HAP-1 (cell line): ENCODE measurements at regions of chr12 and their contacts with region 1.

Region 1: DNA sequence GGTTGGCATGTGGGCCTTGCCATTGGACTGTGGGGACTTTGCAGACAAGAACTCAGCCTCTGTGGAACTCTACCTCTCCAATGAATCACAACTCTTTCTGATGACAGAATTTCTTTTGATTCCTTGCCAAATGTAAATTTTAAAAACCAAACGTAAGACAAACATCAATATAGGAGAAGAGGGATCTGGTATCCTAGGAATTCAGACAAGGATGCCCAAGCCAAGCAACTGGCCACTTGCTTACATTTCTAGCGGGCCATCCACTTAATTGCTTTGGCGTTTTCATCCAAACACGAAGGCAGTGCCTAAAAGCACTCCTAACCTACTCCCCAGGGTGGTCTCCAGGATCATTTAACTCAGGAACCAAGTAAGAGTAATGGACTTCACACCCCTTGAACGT is 23.4 kb upstream of the RAB35 start:
- DNase-seq: no peak
- H3K4me3 ChIP-seq: no peak overlapping the region
- H3K4me1 ChIP-seq: no peaks in the 10 kb centered on the region
- H3K27me3 ChIP-seq: no peaks in the 10 kb centered on the region

Region 2: GRCh38 chr12:119797090-119797489 is 342.9 kb before region 1 on chr12:
- in situ Hi-C with region 1: no loop called
- DNase-seq: no peak
- H3K4me3 ChIP-seq: no peak overlapping the region
- H3K4me1 ChIP-seq: no peaks in the 10 kb centered on the region
- H3K27me3 ChIP-seq: no peaks in the 10 kb centered on the region

Region 3: GRCh38 chr12:120169946-120170345 is 30.0 kb after region 1 on chr12:
- in situ Hi-C with region 1: loop called (anchors 5 kb)
- DNase-seq: no peak
- H3K4me3 ChIP-seq: no peak overlapping the region
- H3K4me1 ChIP-seq: no peaks in the 10 kb centered on the region
- H3K27me3 ChIP-seq: no peaks in the 10 kb centered on the region